ENCODE measurements at regions of chr17 and their contacts with region 1.

Region 1: GRCh38 chr17:6393351-6393952 is 41.5 kb downstream of the AIPL1 start:
- DNase-seq: no peak

Region 2: DNA sequence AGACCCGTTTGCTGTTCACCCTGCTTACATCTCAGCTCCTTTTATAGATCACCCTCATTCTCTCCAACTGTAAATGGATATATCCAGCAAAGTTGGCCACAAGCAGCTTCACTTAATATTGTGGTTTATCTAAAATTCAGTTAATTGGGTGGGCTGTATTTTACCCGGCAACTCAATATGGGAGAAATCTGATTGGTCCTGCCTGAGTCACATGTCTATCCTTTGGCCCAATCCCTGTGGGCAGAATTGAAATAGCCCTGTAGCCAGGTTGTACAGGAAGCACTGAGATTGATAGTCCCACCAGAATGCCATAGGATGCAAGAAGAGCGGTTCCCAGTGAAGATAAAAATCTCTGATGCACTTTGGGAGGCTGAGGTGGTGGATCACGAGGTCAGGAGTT is 31.7 kb before region 1 on chr17:
- intact Hi-C with region 1: loop called in 1 of 2 experiments (anchors 1 kb)
- DNase-seq: no peak

Region 3: GRCh38 chr17:6454957-6455705 is 61.7 kb after region 1 on chr17:
- intact Hi-C with region 1: no loop called
- DNase-seq: no peak

Region 4: DNA sequence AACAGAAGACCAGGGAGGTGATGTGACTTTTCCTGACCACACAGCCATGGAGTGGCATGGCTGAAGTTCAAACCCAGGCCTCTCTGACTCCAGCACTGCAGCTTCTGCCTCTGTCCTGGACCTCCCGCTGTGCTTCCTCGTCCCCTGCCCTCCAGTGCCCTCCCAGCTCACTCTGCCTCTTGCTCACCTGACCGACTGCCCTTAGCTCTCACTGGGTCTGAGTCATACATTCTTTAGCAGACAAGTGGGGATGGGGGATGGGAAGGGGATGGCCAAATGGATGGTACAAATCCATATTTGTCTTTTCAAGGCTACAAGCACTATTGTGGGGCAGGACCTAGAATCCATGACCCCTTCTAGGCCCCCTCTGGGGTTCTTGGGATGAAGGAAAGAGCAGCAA is 129.9 kb after region 1 on chr17:
- intact Hi-C with region 1: no loop called
- DNase-seq: no peak

Measured in posterior vena cava (tissue), 2 donors.